Activated T-helper 2 cell treated with anti-CD3 and anti-CD28 coated beads, Interferon-gamma antibody, Interleukin-2, Interleukin-4, amounts not matched to agents 10 μg/mL and 5 μg/mL and 100 μg/mL, durations not matched to agents 14 hours and 24 hours and 36 hours (primary cell): ENCODE measurements at regions of chr2 and their contacts with region 1.

Region 1: DNA sequence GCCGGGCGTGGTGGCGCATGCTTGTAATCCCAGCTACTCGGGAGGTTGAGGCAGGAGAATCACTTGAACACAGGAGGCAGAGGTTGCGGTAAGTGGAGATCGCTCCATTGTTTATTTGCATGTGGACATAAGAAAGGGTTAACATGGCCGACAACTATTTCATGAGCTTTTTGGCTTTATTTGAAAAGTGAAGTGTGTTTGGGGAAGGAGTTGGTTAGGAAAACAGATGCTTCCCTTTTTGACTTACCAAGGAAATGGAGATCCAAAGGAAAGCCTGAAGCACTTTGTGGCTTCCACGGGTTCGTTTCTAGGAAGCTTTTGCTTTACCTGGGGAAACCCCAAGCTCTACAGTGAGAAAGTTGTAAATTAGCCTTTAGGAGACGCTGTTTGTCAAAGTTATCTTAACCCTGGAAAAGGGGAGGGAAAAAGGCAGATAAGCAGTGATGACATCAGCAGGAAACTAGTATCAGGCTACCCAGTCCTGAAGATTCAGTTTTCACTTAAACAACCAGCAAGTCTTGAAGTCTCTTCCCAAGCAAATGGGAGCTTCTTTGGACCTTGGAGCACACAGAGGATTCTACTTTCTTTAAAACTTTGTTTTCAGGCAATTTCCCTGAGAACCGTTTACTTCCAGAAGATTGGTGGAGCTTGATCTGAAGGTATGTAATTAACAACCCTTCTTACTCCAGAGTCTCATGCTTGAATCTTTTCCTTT is at the start of gene CASP10:
- DNase-seq: peak; percentile 32
- H3K4me3 Mint-ChIP-seq: peak within 1 kb of the TSS; percentile 96
- H3K27ac Mint-ChIP-seq: peak within 1 kb of the TSS; percentile 93
- H3K4me1 Mint-ChIP-seq: peaks cover 43% of the 10 kb centered on the region
- H3K27me3 Mint-ChIP-seq: no peaks in the 10 kb centered on the region
- total RNA-seq, gene CASP10: 14.3 and 17.3 TPM in 2 replicates

Region 2: GRCh38 chr2:200585730-200586643 is 596.8 kb before region 1 on chr2 and contains the start of gene AOX1:
- intact Hi-C with region 1: loop called (anchors 10 kb)
- DNase-seq: peak; percentile 12
- H3K4me3 Mint-ChIP-seq: peak within 1 kb of the TSS; percentile 67
- H3K27ac Mint-ChIP-seq: no peak within 1 kb of the TSS
- H3K4me1 Mint-ChIP-seq: peaks cover 7% of the 10 kb centered on the region
- H3K27me3 Mint-ChIP-seq: peaks cover 19% of the 10 kb centered on the region
- total RNA-seq, gene AOX1: not detected in 2 replicates

Region 3: GRCh38 chr2:201118121-201118960 is 64.5 kb before region 1 on chr2:
- intact Hi-C with region 1: loop called (anchors 2 kb)
- DNase-seq: peak; percentile 76
- H3K4me3 Mint-ChIP-seq: peak overlapping the region; percentile 94
- H3K27ac Mint-ChIP-seq: peak overlapping the region; percentile 95
- H3K4me1 Mint-ChIP-seq: peaks cover 42% of the 10 kb centered on the region
- H3K27me3 Mint-ChIP-seq: no peaks in the 10 kb centered on the region

Region 4: GRCh38 chr2:201130524-201131186 is 52.2 kb before region 1 on chr2:
- intact Hi-C with region 1: loop called (anchors 2 kb)
- DNase-seq: no peak
- H3K4me3 Mint-ChIP-seq: peak overlapping the region; percentile 90
- H3K27ac Mint-ChIP-seq: peak overlapping the region; percentile 92
- H3K4me1 Mint-ChIP-seq: peaks cover 50% of the 10 kb centered on the region
- H3K27me3 Mint-ChIP-seq: no peaks in the 10 kb centered on the region

Region 5: GRCh38 chr2:201194097-201194496 is 11.3 kb after region 1 on chr2:
- intact Hi-C with region 1: loop called (anchors 1 kb)
- DNase-seq: no peak
- H3K4me3 Mint-ChIP-seq: peak overlapping the region; percentile 20
- H3K27ac Mint-ChIP-seq: peak overlapping the region; percentile 62
- H3K4me1 Mint-ChIP-seq: peaks cover 42% of the 10 kb centered on the region
- H3K27me3 Mint-ChIP-seq: no peaks in the 10 kb centered on the region

Region 6: DNA sequence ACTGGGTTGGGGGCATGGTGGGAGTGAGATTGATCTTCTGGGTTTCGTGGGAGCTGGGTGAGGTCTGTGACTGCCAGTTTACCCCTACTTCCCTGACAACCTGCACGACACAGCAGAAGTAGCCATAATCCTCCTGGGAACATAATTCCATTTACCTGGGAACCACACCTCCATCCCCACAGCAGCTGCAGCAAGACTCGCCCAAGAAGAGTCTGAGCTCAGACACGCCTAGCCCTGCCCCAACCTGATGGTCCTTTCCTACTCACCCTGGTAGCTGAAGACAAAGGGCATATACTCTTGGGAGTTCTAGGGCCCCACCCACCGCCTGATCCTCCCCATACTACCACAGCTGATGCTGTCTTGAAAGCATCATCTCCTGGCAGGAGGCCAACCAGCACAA is 130.6 kb after region 1 on chr2:
- intact Hi-C with region 1: no loop called
- DNase-seq: no peak
- H3K4me3 Mint-ChIP-seq: no peak overlapping the region
- H3K27ac Mint-ChIP-seq: no peak overlapping the region
- H3K4me1 Mint-ChIP-seq: no peaks in the 10 kb centered on the region
- H3K27me3 Mint-ChIP-seq: no peaks in the 10 kb centered on the region

Region 7: DNA sequence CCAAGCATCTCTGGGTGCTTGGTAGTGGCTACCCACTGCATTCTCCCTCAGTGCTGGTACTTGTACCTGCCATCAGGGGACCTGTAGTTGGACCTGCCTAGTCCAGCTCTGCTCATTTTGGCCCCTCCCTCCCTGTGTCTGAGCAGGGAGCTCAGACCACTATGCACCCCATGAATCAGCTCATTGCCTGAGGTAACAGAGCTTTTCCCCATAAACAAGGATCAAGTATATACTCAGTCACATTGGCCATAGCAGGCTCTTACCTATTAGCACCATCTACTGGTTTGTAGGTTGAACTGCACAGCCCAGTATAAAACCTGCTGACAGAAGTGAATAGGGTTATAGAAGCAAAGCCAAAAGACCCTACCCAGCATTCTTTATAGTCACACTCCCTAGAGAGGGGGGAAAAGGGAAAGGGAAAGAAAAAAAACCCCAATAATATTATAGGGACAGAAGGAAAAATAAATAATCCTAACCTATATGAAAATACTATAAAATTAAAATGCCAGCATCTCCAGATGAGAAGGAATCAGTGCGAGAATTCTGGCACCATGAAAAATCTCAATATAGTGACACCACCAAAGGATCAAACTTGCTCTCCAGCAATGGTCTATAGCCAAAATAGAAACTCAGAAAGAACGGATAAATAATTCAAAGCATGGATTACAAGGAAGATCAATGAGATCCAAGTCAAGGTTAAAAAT is 181.2 kb after region 1 on chr2:
- intact Hi-C with region 1: loop called (anchors 2 kb)
- DNase-seq: no peak
- H3K4me3 Mint-ChIP-seq: no peak overlapping the region
- H3K27ac Mint-ChIP-seq: no peak overlapping the region
- H3K4me1 Mint-ChIP-seq: peaks cover 31% of the 10 kb centered on the region
- H3K27me3 Mint-ChIP-seq: no peaks in the 10 kb centered on the region